ENCODE measurements at regions of chr20 and their contacts with region 1.

Region 1: GRCh38 chr20:17504898-17505635 is 26.1 kb downstream of the BFSP1 start:
- DNase-seq: peak; percentile 82
- ATAC-seq: peak; percentile 82
- H3K4me3 Mint-ChIP-seq: peak overlapping the region; percentile 72
- H3K27ac Mint-ChIP-seq: peak overlapping the region; percentile 77
- H3K4me1 Mint-ChIP-seq: peaks cover 52% of the 10 kb centered on the region
- H3K27me3 Mint-ChIP-seq: peaks cover 26% of the 10 kb centered on the region

Region 2: DNA sequence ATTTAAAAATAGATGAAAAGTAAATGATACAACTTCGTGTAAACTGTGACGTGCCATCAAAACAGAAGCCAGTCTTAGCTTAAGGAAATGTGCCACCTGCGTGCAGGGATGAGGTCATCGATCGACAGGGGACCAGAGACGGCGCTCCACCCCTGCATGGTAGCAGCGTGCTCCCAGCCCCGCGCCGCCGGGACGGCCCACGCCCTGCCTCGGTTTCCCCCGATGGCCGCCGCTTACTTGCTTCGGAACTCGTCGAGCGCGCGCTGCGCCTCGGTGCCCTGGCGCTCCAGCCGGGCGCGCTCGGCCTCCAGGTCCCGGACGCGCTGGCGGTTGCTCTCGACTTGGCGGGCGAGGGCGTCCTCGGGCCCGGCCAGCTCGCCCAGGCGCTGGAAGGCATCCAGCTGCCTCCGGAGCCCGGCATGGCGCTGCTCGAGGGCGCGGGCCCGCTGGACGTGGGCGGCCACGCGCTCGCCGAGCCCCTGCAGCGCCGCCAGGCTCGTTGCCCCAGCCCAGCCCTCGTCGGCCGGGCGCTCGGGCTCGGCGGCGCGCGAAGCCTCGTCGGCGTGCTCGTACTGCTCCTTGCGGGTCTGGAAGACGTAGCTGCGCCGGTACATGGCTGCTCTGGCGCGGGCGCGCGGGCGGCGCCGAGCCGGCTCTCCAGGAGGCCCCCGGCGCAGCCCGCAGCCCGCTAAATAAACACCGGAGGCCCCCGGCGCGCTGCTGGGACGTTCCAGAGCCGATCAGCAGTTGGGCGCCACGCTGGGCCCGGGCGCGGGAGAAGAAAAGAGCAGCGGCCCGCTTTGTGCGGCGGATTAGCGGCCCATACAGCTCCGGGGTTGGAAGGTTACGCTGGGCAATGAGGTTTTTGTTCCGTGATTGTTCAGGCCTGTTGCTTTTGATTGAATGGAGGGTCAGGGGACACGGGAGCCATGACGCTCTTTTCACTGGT is 25.9 kb after region 1 on chr20 and contains the start of gene BFSP1:
- CTCF ChIA-PET with region 1: interaction called, 22 read pairs
- POLR2A ChIA-PET with region 1: no interaction called
- DNase-seq: peak; percentile 61
- ATAC-seq: peak; percentile 83
- H3K4me3 Mint-ChIP-seq: peak within 1 kb of the TSS; percentile 86
- H3K27ac Mint-ChIP-seq: peak within 1 kb of the TSS; percentile 86
- H3K4me1 Mint-ChIP-seq: peaks cover 27% of the 10 kb centered on the region
- H3K27me3 Mint-ChIP-seq: peaks cover 36% of the 10 kb centered on the region
- total RNA-seq, gene BFSP1: 0.50 to 0.55 TPM

Region 3: DNA sequence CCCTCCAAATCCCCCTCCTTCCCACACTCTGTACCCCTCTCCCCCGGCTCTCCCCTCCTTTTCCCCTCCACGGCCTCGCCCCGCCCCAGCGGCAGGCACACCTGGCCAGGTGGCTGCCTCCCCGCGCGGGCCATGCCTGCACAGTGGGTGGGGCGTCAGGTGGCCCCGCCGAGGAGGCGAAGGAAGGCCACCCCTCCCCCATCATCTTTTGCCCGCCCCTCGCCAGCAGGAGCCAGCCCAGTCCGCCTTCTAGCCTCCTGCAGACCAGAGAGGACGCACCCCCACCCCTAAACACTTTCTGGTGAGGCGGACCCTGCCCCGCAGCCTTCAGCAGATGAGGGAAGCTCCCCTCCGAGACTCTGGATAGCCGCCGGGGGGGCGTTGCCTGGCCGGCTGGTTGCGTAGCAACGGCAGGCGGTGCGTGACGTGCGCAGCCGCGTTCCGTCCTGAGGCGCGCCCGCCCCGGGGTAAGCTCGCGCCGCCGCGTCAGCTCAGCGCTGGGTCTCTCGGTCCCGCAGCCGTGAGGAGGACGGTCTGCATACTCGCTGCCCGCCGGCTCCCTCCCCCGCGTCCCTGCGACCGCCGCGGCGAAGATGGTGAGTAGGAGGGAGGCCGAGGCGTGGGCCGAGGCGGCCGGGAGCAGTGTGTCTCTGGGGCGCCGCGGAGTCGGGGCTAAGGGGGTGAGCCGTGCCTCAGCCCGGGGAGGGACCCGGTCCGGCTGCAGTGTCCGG is 64.7 kb after region 1 on chr20 and contains the start of gene DSTN:
- CTCF ChIA-PET with region 1: interaction called, 20 read pairs
- POLR2A ChIA-PET with region 1: no interaction called
- DNase-seq: peak; percentile 90
- ATAC-seq: peak; percentile 92
- H3K4me3 Mint-ChIP-seq: peak within 1 kb of the TSS; percentile 92
- H3K27ac Mint-ChIP-seq: peak within 1 kb of the TSS; percentile 87
- H3K4me1 Mint-ChIP-seq: peaks cover 25% of the 10 kb centered on the region
- H3K27me3 Mint-ChIP-seq: peaks cover 20% of the 10 kb centered on the region
- total RNA-seq, gene DSTN: 59.0 to 63.6 TPM

Region 4: DNA sequence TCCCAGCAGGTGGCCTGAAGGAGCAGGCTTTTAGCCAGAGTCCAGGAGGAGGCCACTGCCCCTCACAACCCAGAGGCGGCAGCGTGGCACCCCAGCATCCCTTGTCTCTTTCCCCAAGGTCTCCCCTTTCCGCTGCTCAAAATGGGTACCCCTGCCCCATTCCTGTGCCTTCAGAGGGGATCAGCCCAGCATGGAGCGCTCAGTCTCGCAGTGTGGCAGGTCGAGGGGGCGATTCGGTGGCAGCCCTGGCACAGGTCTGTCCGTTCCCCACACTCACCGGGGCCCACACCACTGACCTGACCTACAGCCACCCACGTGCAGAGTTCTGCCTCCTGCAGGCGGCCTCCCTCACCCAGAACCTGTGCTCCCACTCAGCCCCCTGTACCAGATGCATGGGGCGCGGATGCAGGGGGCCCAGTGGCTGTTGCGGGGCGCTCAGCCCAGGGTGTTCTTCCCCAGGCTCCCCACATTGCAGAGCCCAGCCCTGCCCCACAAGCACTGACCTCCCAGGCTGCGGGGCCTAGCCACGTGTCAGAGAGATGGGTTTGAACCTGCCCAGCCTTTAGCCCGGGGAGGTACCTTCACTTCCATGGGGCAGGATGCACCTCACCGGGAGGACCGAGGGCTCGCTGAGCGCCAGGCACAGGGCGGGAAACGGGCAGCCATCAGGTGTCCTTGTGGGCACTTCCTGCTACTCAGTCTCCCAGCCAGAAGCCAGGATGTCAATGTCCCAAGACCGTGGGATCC is 106.6 kb after region 1 on chr20:
- CTCF ChIA-PET with region 1: interaction called, 11 read pairs
- POLR2A ChIA-PET with region 1: interaction called, 5 read pairs
- DNase-seq: peak; percentile 44
- ATAC-seq: peak; percentile 4
- H3K4me3 Mint-ChIP-seq: peak overlapping the region; percentile 67
- H3K27ac Mint-ChIP-seq: peak overlapping the region; percentile 97
- H3K4me1 Mint-ChIP-seq: peaks cover 47% of the 10 kb centered on the region
- H3K27me3 Mint-ChIP-seq: no peaks in the 10 kb centered on the region

Region 5: GRCh38 chr20:17898548-17898994 is 393.5 kb after region 1 on chr20:
- CTCF ChIA-PET with region 1: interaction called, 32 read pairs
- POLR2A ChIA-PET with region 1: no interaction called
- DNase-seq: peak; percentile 82
- ATAC-seq: peak; percentile 69
- H3K4me3 Mint-ChIP-seq: no peak overlapping the region
- H3K27ac Mint-ChIP-seq: no peak overlapping the region
- H3K4me1 Mint-ChIP-seq: peaks cover 21% of the 10 kb centered on the region
- H3K27me3 Mint-ChIP-seq: peaks cover 34% of the 10 kb centered on the region

Region 6: GRCh38 chr20:17938871-17939619 is 434.0 kb after region 1 on chr20:
- CTCF ChIA-PET with region 1: interaction called, 14 read pairs
- POLR2A ChIA-PET with region 1: no interaction called
- DNase-seq: peak; percentile 74
- ATAC-seq: peak; percentile 82
- H3K4me3 Mint-ChIP-seq: no peak overlapping the region
- H3K27ac Mint-ChIP-seq: peak overlapping the region; percentile 66
- H3K4me1 Mint-ChIP-seq: peaks cover 28% of the 10 kb centered on the region
- H3K27me3 Mint-ChIP-seq: no peaks in the 10 kb centered on the region